Head of caudate nucleus (tissue), 42 donors: ENCODE measurements at regions of chrX and their contacts with region 1.

Region 1: DNA sequence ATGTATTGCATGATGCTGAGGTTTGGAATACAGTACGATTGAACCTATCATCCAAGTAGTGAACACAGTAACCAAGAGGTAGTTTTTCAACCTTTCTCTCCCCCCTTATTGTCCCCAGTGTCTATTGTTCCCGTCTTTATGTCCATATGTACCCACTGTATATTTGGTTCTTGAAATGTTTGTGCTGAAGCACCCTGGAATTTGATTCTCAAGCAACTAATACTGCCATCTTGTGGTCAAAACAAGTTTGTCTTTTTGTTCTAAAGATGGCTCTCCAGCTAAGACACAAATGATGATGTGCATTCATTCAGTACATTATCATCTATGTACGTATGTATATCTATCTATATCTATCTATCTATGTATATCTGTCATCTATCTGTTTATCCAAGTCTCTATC is 33.5 kb upstream of the DCX start:
- DNase-seq: peak in 2 of 42 donors; percentile 9 to 40

Region 2: DNA sequence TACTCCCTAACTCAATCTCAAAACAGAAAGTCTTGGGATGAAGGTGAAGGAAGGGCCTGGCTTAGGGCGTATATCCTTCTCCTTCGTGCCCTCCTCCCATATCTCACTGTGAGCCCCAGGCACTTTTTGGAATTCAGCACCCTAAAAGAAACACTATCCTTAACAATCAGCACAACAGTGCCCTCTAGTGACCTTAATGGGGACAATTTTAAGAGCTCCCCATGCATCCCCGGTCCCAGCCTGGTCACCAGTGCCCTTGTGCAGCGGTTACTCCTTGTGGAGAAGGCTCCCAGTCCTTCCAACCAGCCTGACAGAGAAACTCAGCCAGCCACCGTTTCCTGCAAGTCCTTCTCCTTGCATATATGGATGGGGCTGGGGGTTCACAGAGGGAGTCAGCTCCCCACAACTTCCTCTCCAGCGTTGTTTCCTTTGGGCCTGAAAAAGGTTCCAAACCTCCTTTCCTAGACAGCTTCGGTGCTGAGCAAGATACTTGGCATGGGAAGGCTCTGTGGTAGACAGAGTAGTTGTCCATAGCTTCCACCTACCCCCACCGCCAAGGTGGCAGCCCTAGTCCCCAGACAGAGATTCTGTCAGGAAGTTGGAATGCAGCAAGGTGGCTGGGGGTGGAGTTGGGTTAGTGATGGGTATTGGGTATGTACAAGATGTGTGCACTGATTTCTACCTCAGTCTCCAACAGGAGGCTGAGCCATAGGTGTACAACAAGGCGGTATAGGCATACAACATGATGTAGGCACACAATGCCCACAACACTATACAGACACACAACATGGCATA is 345.1 kb before region 1 on chrX:
- intact Hi-C with region 1: loop called (anchors 10 kb)
- DNase-seq: peak in 12 of 42 donors; percentile 12 to 48 (median 24)